Gastrocnemius medialis (tissue), 4 donors: ENCODE measurements at regions of chr11 and their contacts with region 1.

Region 1: DNA sequence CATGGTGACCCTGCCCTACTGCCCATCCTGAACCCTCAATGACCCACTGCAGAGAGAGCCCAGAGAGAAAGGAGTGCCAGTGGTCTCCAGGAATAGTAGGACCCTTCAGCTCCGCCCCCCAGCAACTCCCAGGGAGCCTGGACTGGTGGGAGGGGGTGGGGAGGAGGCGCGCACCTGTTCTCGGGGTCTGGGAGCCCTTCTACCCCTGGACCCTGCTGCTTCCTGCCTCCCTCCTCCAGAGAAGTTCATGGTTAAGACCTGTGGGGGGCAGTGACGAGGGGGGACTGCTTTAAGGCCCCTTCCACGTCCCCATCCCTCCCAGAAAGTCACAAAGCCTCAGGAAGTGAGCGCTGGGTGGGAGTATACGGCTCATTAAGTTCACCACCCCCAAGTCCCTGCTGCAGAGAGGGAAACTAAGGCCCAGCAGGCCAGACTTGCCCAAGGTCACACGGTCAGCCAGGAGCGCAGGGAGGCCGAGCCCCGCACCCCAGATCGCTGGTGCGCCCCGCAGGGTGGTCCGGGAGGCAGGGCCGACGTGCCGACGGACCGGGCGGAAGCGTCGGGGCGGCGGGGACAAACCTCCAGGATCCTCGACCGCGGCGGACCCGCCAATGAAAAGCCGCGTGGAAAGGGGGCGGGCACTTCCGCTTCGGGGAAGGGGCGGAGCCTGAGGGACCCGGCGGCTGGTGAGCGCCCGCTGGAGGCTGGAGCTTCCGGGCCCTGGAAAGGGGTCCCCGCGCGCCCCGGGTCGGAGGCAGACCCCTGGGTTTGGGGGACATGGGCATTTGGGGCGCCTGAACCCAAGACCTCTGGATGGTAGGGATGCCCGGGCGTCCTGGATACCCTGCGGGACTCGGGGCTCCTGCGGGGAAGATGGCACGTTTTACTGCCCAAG is at the starts of genes NUDT22 and TRPT1:
- DNase-seq: peak; percentile 85 to 90
- ATAC-seq: peak; percentile 70 to 72
- H3K4me3 ChIP-seq: peak within 1 kb of the TSS; percentile 86 to 92 (median 88)
- H3K27ac ChIP-seq: peak within 1 kb of the TSS; percentile 95 to 99 (median 96)
- H3K4me1 ChIP-seq: peaks cover 44 to 58% of the 10 kb centered on the region in 2 donors
- H3K27me3 ChIP-seq: no peaks in the 10 kb centered on the region
- CTCF ChIP-seq: peak in 4 of 5 experiments; percentile 6 to 37 (median 32)
- POLR2A ChIP-seq: peak; percentile 91 to 98
- total RNA-seq, gene NUDT22: 32.3 to 70.7 (median 53.4) TPM
- total RNA-seq, gene TRPT1: 80.9 to 231 (median 139) TPM

Region 2: GRCh38 chr11:63888170-63889086 is 337.4 kb before region 1 on chr11:
- in situ Hi-C with region 1: no loop called
- intact Hi-C with region 1: no loop called
- DNase-seq: peak in 1 of 2 donors; percentile 41
- ATAC-seq: peak; percentile 59 to 72
- H3K4me3 ChIP-seq: peak overlapping the region in 2 of 4 donors; percentile 12 to 26
- H3K27ac ChIP-seq: peak overlapping the region; percentile 28 to 56 (median 46)
- H3K4me1 ChIP-seq: peaks cover 20 to 24% of the 10 kb centered on the region in 2 donors
- H3K27me3 ChIP-seq: no peaks in the 10 kb centered on the region
- CTCF ChIP-seq: no peak
- POLR2A ChIP-seq: no peak

Region 3: GRCh38 chr11:64110465-64111375 is 115.1 kb before region 1 on chr11:
- in situ Hi-C with region 1: no loop called
- intact Hi-C with region 1: no loop called
- DNase-seq: no peak
- ATAC-seq: no peak
- H3K4me3 ChIP-seq: no peak overlapping the region
- H3K27ac ChIP-seq: no peak overlapping the region
- H3K4me1 ChIP-seq: peaks cover 18 to 22% of the 10 kb centered on the region in 2 donors
- H3K27me3 ChIP-seq: no peaks in the 10 kb centered on the region
- CTCF ChIP-seq: no peak
- POLR2A ChIP-seq: no peak

Region 4: DNA sequence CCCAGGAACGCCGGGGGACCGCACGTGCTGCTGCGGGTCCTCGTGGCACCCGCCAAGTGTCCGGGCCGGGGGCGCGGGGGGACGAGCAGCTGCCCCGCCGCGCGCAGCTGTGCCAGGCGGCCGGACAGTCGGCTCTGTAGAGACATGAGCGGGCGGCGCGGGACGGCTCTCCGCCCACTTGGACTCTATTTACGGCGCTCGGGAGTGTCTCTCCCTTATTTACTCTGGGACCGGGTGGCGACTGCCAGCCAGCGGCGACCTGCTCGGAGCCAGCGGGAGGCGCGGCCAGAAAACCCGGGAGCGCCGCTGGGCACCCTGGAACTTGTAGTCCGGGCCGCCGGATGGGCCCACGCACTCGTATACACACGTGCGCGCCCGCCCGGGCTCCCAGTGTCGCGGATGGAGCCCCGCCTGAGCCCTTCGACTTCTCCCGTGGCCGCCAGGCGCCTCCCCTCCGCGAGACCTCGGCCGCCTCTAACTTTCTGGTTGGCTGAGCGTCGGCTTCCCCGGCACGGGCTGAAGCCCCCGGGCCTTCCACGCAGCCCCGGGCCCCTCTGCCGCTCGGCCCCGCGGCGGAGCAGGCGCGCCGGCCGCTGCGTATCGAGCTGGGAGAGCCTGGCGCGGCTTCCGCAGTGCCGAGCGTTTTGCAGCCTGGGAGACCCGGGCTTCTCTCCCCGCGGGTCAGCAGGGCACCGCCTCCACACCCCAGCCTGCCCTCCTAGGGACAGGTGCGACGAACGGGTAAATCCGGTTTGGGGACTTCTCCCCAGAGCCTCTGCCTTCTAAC is 59.8 kb before region 1 on chr11 and contains the start of gene MACROD1:
- in situ Hi-C with region 1: no loop called
- intact Hi-C with region 1: loop called (anchors 5 kb)
- DNase-seq: peak; percentile 92 to 95
- ATAC-seq: peak; percentile 64 to 65
- H3K4me3 ChIP-seq: peak within 1 kb of the TSS; percentile 58 to 84 (median 77)
- H3K27ac ChIP-seq: peak within 1 kb of the TSS; percentile 94 to 98 (median 97)
- H3K4me1 ChIP-seq: peaks cover 22 to 29% of the 10 kb centered on the region in 2 donors
- H3K27me3 ChIP-seq: no peaks in the 10 kb centered on the region
- CTCF ChIP-seq: peak in 2 of 5 experiments; percentile 9 to 11
- POLR2A ChIP-seq: peak; percentile 96 to 98
- total RNA-seq, gene MACROD1: 162 to 308 (median 205) TPM